PC-9 (cell line): ENCODE measurements at regions of chr15 and their contacts with region 1.

Region 1: DNA sequence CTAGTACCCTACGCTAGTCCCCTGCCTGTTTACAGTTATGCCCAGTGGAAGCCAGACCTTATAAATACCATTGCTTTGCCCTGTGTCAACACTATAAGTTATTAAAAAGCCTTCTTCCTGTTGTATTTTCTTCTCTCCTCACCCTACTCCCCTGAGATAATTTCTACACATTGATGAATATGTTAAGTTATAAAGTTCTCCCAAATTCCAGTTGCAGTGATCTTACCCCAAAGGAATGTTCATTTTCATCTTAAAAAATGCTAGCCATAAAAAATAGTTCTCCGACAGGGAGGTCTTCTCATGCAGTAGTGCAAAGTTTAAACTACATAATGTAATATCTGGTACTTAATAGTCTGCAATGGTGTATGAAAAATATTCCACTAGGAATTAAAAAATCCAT is 58.6 kb downstream of the MAP2K5 start:
- DNase-seq: no peak
- H3K4me3 ChIP-seq: no peak overlapping the region
- H3K27ac ChIP-seq: no peak overlapping the region
- H3K4me1 ChIP-seq: no peaks in the 10 kb centered on the region
- H3K27me3 ChIP-seq: no peaks in the 10 kb centered on the region
- CTCF ChIP-seq: no peak

Region 2: GRCh38 chr15:68183616-68184315 is 582.7 kb after region 1 on chr15:
- CTCF ChIA-PET with region 1: no interaction called
- POLR2A ChIA-PET with region 1: interaction called, 11 read pairs
- intact Hi-C with region 1: no loop called
- DNase-seq: no peak
- H3K4me3 ChIP-seq: no peak overlapping the region
- H3K27ac ChIP-seq: no peak overlapping the region
- H3K4me1 ChIP-seq: no peaks in the 10 kb centered on the region
- H3K27me3 ChIP-seq: no peaks in the 10 kb centered on the region
- CTCF ChIP-seq: no peak